Right cardiac atrium (tissue), 5 donors: ENCODE measurements at regions of chr19 and their contacts with region 1.

Region 1: DNA sequence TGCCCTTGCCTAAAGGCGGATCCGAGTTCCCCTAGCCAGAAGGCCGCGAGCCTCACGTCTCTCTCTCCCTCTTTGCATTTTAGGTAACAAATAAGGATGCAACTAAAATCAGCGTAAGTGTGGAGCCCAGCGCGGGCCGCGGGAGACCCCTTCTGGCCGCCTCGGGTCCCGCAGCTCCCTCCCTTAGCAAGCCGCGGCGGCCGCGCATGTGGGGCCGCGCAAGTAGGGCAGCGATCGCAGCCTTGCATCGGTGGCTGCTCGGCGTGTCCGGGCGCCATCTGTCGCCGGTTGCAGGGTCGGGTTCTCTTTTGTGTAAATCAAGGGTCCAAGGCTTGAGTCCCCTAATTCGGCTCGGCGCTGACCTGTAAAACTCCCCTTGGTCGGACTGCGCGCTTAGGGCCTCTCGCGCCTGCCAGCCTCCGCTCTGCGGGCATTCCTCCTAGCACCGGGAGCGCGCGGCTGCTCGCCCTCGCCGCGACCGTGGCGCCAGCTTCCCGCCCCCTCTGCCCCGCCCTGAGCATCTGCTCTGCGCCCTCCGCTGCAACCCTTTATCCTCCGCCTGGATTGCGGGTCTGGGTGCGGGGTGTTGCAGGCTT is 2.7 kb downstream of the VSTM2B start:
- DNase-seq: peak; percentile 56 to 87 (median 81)
- ATAC-seq: peak; percentile 85
- H3K4me3 ChIP-seq: peak overlapping the region; percentile 7
- H3K27ac ChIP-seq: no peak overlapping the region
- H3K4me1 ChIP-seq: peaks cover 3% of the 10 kb centered on the region
- H3K27me3 ChIP-seq: no peaks in the 10 kb centered on the region

Region 2: GRCh38 chr19:29285878-29286277 is 242.6 kb before region 1 on chr19:
- intact Hi-C with region 1: loop called in 3 of 4 experiments (anchors 10 kb)
- DNase-seq: no peak
- ATAC-seq: no peak
- H3K4me3 ChIP-seq: no peak overlapping the region
- H3K27ac ChIP-seq: no peak overlapping the region
- H3K4me1 ChIP-seq: no peaks in the 10 kb centered on the region
- H3K27me3 ChIP-seq: no peaks in the 10 kb centered on the region

Region 3: DNA sequence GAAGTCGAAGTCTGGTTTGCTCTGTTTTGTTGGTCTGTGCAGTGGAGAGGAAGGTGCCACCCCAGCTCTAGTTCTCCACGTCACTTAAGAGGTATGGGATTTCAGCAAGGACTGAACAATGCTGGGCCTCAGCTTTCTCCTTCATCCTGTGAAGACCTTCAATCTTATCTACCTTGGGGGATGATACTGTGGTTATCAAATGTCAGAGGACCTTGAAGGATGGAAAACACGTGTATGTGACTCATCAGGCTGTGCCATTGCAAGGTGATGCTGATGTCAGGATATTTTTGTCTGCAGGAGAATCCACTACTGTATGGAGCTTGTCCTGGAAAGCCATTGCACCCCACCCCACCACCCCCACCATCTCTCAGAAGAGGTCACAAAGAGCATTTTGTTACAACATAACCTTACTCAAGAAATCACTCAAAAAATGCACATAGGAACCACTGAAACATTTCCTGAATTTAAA is 234.1 kb before region 1 on chr19:
- intact Hi-C with region 1: loop called in 3 of 4 experiments (anchors 10 kb)
- DNase-seq: no peak
- ATAC-seq: no peak
- H3K4me3 ChIP-seq: no peak overlapping the region
- H3K27ac ChIP-seq: no peak overlapping the region
- H3K4me1 ChIP-seq: no peaks in the 10 kb centered on the region
- H3K27me3 ChIP-seq: no peaks in the 10 kb centered on the region

Region 4: GRCh38 chr19:29549105-29550070 is 20.9 kb after region 1 on chr19:
- intact Hi-C with region 1: no loop called
- DNase-seq: no peak
- ATAC-seq: peak in 1 of 2 donors; percentile 28
- H3K4me3 ChIP-seq: no peak overlapping the region
- H3K27ac ChIP-seq: no peak overlapping the region
- H3K4me1 ChIP-seq: no peaks in the 10 kb centered on the region
- H3K27me3 ChIP-seq: no peaks in the 10 kb centered on the region